GM12878 (cell line): ENCODE measurements at regions of chr7 and their contacts with region 1.

Region 1: DNA sequence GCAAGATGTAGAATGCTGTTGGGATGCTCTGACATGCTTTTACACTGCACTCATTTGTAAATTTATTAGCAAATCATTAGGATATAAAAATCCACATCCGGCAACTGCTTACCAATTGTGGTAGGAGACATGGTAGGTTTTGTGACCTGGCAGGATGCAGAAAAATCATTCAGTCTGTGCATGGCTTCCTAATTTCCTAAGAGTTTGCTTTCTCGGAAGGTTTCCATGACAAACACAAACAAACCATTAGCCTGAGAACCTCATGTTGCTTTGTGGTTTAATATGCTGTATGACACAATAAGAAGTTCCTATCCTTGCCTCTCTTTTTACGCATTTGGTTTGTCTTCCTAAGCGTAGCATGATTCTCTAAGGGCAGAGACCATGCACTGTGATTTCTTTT is 14.7 kb upstream of the LMBR1 start:
- DNase-seq: no peak
- ATAC-seq: no peak
- H3K4me3 ChIP-seq: no peak overlapping the region
- H3K27ac ChIP-seq: no peak overlapping the region
- H3K4me1 ChIP-seq: no peaks in the 10 kb centered on the region
- H3K27me3 ChIP-seq: no peaks in the 10 kb centered on the region
- CTCF ChIP-seq: no peak
- EP300 ChIP-seq: no peak
- POLR2A ChIP-seq: no peak
- RAD21 ChIP-seq: no peak

Region 2: GRCh38 chr7:156927571-156928405 is 20.1 kb after region 1 on chr7:
- CTCF ChIA-PET with region 1: no interaction called
- POLR2A ChIA-PET with region 1: no interaction called
- RAD21 ChIA-PET with region 1: no interaction called
- SMC1A ChIA-PET with region 1: no interaction called
- in situ Hi-C with region 1: no loop called
- intact Hi-C with region 1: no loop called
- DNase-seq: no peak
- ATAC-seq: no peak
- H3K4me3 ChIP-seq: no peak overlapping the region
- H3K27ac ChIP-seq: no peak overlapping the region
- H3K4me1 ChIP-seq: no peaks in the 10 kb centered on the region; the same call in 1 of the 2 replicates
- H3K27me3 ChIP-seq: no peaks in the 10 kb centered on the region; a peak in 2 of 4 replicates
- CTCF ChIP-seq: no peak
- EP300 ChIP-seq: no peak
- POLR2A ChIP-seq: no peak
- RAD21 ChIP-seq: no peak

Region 3: GRCh38 chr7:156949541-156950380 is 42.1 kb after region 1 on chr7 and contains the start of gene NOM1:
- CTCF ChIA-PET with region 1: no interaction called
- POLR2A ChIA-PET with region 1: no interaction called
- RAD21 ChIA-PET with region 1: interaction called, 3 read pairs
- SMC1A ChIA-PET with region 1: interaction called, 3 read pairs
- in situ Hi-C with region 1: no loop called
- intact Hi-C with region 1: loop called (anchors 5 kb)
- DNase-seq: peak; percentile 20
- ATAC-seq: peak; percentile 93
- H3K4me3 ChIP-seq: peak within 1 kb of the TSS; percentile 91
- H3K27ac ChIP-seq: peak within 1 kb of the TSS; percentile 74
- H3K4me1 ChIP-seq: peaks cover 2% of the 10 kb centered on the region; the same call in 1 of the 2 replicates
- H3K27me3 ChIP-seq: no peaks in the 10 kb centered on the region; a peak in 1 of 4 replicates
- CTCF ChIP-seq: peak; percentile 70 to 82 (median 72); a peak in 5 of 6 replicates
- EP300 ChIP-seq: no peak
- POLR2A ChIP-seq: peak; percentile 92
- RAD21 ChIP-seq: peak; percentile 55
- polyA plus RNA-seq, gene NOM1: 2.9 to 4.2 TPM

Region 4: DNA sequence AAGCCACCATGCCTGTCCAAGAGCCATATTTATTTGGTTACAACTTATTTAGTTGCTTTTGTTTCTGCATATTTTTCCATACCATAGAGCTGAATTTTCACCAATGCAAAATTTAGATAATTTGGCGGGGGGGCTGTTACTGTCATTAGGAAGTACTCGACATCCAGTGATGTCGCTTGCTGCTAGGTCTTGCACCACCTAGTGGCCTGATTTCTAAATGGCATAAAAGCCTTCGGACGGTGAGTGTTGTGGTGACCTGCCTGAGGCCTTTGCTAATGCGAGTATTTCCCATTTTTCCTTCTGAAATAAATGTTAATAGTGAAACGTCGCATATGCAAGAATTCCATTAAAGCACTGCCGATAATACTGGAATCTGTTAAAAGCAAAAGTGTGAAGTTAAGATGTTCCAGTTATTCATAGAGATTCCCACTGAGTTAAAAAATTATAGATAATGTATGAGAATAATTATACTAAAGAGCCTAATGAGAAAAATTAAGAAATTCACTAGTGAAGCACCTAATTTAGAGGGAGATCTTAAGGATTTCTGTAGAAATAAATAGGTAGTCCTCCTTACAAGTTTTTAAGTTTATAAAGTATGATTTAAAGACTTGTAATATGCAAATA is 343.1 kb after region 1 on chr7:
- CTCF ChIA-PET with region 1: interaction called, 3 read pairs
- POLR2A ChIA-PET with region 1: no interaction called
- RAD21 ChIA-PET with region 1: no interaction called
- SMC1A ChIA-PET with region 1: interaction called, 3 read pairs
- in situ Hi-C with region 1: no loop called
- intact Hi-C with region 1: loop called (anchors 1 kb)
- DNase-seq: no peak
- ATAC-seq: peak; percentile 94
- H3K4me3 ChIP-seq: no peak overlapping the region
- H3K27ac ChIP-seq: no peak overlapping the region
- H3K4me1 ChIP-seq: no peaks in the 10 kb centered on the region
- H3K27me3 ChIP-seq: no peaks in the 10 kb centered on the region
- CTCF ChIP-seq: peak; percentile 69 to 84 (median 80)
- EP300 ChIP-seq: no peak
- POLR2A ChIP-seq: no peak
- RAD21 ChIP-seq: peak; percentile 46